HCT116 (cell line): ENCODE measurements at regions of chr1 and their contacts with region 1.

Region 1: DNA sequence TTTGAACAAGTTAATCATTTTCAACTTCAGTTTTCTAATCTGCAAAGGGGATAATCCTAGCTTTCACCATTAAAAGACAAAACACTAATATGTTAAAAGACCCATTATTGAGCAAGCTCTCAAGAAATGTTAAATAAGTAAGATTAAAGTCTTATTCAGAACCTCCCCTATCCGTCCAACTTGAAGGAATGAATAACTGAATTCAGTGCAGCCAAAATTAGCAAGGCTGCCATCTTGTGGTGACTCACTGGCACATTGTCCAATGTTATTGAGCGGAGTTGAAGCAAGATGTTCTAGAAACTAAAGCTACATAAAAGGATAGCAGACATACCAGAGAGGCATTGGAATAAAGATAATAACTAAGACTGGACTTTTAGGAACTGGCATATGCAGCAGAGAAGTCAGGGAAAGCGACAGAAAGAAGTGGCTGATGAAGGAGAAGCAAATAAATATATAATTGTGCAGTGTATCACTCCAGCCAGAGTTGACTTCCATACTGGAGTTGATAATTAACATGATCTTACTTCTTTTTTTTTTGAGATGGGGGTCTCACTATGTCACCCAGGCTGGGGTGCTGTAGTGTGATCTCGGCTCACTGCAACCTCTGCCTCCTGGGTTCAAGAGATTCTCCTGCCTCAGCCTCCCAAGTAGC is 8.2 kb upstream of the CAP1 start:
- DNase-seq: peak; percentile 35
- ATAC-seq: peak; percentile 89
- H3K4me3 ChIP-seq: no peak overlapping the region
- H3K27ac ChIP-seq: no peak overlapping the region
- H3K4me1 ChIP-seq: peaks cover 0 to 5% of the 10 kb centered on the region in 2 experiments; a peak in 1 of 4 replicates
- H3K27me3 ChIP-seq: no peaks in the 10 kb centered on the region
- CTCF ChIP-seq: peak; percentile 27 to 73 (median 69); a peak in 5 of 6 replicates
- POLR2A ChIP-seq: no peak
- RAD21 ChIP-seq: peak; percentile 75

Region 2: DNA sequence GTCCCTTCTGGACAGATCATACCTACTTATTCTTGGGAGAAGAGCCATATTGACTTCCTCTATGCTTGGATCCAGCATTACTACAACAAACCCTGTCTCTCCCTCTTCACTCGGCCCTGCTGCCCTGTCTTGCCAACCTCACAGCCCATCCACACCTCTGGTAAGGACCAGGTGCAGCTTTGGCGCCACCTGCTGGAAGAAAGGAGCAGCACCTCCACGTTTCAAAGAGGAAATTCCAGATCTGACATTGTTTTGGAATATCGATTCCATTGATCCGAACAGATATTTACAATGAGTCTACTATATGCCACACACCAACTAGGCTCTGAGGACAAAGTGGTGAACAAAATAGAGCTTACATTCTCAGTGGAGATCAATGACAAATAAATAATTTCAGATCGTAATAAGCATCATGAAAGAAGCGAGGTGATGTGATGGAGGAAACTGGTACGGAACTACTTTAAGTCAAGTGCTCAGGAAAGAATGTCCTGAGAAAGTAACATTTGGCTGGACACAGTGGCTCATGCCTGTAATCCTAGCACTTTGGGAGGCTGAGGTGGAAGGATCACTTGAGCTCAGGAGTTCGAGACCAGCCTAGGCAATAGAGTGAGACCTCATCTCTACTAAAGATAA is 58.7 kb before region 1 on chr1:
- CTCF ChIA-PET with region 1: no interaction called
- POLR2A ChIA-PET with region 1: no interaction called
- RAD21 ChIA-PET with region 1: no interaction called
- intact Hi-C with region 1: loop called (anchors 2 kb)
- DNase-seq: peak; percentile 45
- ATAC-seq: peak; percentile 89
- H3K4me3 ChIP-seq: no peak overlapping the region
- H3K27ac ChIP-seq: no peak overlapping the region
- H3K4me1 ChIP-seq: peaks cover 6 to 9% of the 10 kb centered on the region in 2 experiments; a peak in 3 of 4 replicates
- H3K27me3 ChIP-seq: no peaks in the 10 kb centered on the region
- CTCF ChIP-seq: peak; percentile 96 to 99 (median 98)
- POLR2A ChIP-seq: no peak
- RAD21 ChIP-seq: peak; percentile 98